Colonic mucosa (tissue), 4 donors: ENCODE measurements at regions of chr7 and their contacts with region 1.

Region 1: GRCh38 chr7:99531354-99531765 is 20.6 kb downstream of the FAM200A start:
- DNase-seq: no peak
- H3K4me3 ChIP-seq: no peak overlapping the region
- H3K27ac ChIP-seq: no peak overlapping the region
- H3K4me1 ChIP-seq: no peaks in the 10 kb centered on the region
- H3K27me3 ChIP-seq: no peaks in the 10 kb centered on the region
- CTCF ChIP-seq: no peak

Region 2: DNA sequence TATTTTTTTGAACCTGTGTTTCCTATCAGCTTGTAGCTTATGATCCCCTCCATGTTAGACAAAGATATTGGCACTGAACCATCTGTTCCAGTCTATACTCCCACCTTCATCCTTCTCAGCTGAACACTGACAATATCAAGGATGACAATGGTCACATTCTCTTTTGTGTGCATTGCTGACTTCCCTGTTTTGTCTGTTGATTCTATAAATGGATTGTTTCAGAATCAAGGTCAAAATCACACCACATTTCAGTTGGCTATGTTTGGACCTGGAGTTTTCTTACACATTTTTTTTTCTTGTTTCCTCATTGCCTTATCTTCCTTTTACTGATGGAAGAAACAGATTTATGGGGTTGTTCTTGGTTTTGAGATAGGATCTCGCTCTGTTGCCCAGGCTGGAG is 376.1 kb before region 1 on chr7:
- intact Hi-C with region 1: no loop called
- DNase-seq: no peak
- H3K4me3 ChIP-seq: no peak overlapping the region
- H3K27ac ChIP-seq: peak overlapping the region; percentile 53
- H3K4me1 ChIP-seq: no peaks in the 10 kb centered on the region
- H3K27me3 ChIP-seq: no peaks in the 10 kb centered on the region
- CTCF ChIP-seq: no peak

Region 3: GRCh38 chr7:99839287-99840021 is 308.1 kb after region 1 on chr7:
- intact Hi-C with region 1: loop called (anchors 10 kb)
- DNase-seq: peak; percentile 65
- H3K4me3 ChIP-seq: no peak overlapping the region
- H3K27ac ChIP-seq: peak overlapping the region; percentile 68
- H3K4me1 ChIP-seq: peaks cover 3% of the 10 kb centered on the region
- H3K27me3 ChIP-seq: no peaks in the 10 kb centered on the region
- CTCF ChIP-seq: no peak